Activated B cell treated with CpG ODN at 0.5 μM for 24 hours (primary cell): ENCODE measurements at regions of chr2 and their contacts with region 1.

Region 1: DNA sequence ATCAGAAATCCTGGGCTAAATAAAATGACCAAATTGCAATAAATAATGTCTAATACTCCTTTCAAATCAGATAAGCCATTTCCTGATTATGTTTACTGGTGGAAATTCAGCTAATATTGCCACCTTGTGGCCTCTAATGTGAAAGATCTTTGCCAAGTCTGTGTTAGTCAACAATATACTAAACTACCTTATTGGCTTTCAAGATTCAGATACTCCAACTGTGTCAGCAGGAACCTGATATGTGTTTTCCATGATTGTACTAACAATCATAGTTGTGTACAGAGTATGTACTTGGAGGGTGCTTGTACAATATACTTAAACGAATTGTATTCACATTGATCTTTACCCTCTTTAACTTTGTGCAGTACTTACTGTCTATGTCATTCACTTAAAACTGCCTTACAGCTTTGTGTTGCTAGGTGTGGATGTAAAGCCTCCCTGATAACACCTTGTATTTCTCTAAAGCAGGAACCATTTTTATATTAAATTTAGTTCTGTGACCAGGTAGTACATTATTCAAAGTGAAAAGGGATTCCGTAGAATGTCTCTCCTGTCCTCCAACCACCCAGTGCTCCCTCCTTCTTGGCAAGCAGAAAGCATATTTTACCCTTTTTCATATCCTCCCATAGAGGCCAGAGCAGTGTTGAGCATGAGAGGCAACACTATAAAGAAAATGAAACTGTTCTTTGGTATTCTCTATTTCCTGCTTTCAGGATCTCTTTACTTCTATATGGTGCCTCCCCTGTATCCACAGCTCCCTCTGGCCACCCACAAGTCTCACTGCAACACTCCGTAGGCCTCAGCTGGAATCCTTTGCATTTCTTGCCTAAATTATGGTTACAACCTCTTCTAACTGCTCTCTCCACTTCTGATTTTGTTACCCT is 75.2 kb upstream of the C2orf15 start:
- DNase-seq: no peak
- ATAC-seq: peak; percentile 85
- H3K4me3 Mint-ChIP-seq: no peak overlapping the region
- H3K27ac Mint-ChIP-seq: no peak overlapping the region
- H3K4me1 Mint-ChIP-seq: no peaks in the 10 kb centered on the region
- H3K27me3 Mint-ChIP-seq: no peaks in the 10 kb centered on the region
- CTCF ChIP-seq: no peak

Region 2: DNA sequence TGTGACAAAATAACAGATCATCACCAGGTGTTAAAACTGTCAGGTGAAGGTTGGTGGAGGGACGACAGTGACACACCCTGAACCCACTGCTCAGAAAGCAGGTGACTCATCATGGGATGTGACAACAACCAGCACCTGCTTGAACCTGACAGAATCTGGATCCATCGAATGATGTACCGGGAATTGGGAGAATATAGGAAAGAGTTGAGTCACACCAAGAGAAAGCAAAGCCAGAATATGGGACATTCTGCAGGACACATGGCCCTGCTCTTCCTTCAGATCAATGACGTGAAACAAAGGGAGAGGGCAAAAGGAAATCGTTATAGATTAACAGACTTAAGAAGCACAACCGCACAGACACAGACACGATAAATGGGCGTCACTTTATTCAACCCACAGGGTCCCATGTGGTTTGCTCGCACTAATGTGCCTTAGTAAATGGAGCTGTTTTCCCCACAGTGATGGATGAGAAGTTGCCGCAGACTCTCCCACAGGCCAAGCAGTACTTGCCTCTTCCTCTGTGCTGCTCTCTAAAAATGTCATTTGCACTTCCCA is 230.4 kb before region 1 on chr2:
- CTCF ChIA-PET with region 1: no interaction called
- POLR2A ChIA-PET with region 1: no interaction called
- intact Hi-C with region 1: loop called (anchors 10 kb)
- DNase-seq: no peak
- ATAC-seq: peak; percentile 18
- H3K4me3 Mint-ChIP-seq: no peak overlapping the region
- H3K27ac Mint-ChIP-seq: no peak overlapping the region
- H3K4me1 Mint-ChIP-seq: peaks cover 6% of the 10 kb centered on the region
- H3K27me3 Mint-ChIP-seq: no peaks in the 10 kb centered on the region
- CTCF ChIP-seq: no peak